ENCODE measurements at regions of chr12 and their contacts with region 1.

Region 1: GRCh38 chr12:12486661-12487240 is 75.9 kb downstream of the DUSP16 start:
- DNase-seq: no peak
- ATAC-seq: no peak
- H3K4me3 ChIP-seq: no peak overlapping the region
- H3K4me3 Mint-ChIP-seq: no peak overlapping the region
- H3K27ac ChIP-seq: peak overlapping the region in 1 of 2 donors; percentile 56
- H3K27ac Mint-ChIP-seq: peak overlapping the region; percentile 73
- H3K4me1 ChIP-seq: peaks cover 37% of the 10 kb centered on the region
- H3K4me1 Mint-ChIP-seq: peaks cover 51% of the 10 kb centered on the region
- H3K27me3 ChIP-seq: no peaks in the 10 kb centered on the region
- H3K27me3 Mint-ChIP-seq: no peaks in the 10 kb centered on the region
- CTCF ChIP-seq: no peak

Region 2: GRCh38 chr12:12456637-12457036 is 30.1 kb before region 1 on chr12:
- CTCF ChIA-PET with region 1: no interaction called
- POLR2A ChIA-PET with region 1: interaction called, 26 read pairs
- intact Hi-C with region 1: no loop called
- DNase-seq: peak in 3 of 14 experiments; percentile 61 to 67 (median 63)
- ATAC-seq: peak; percentile 74
- H3K4me3 ChIP-seq: peak overlapping the region; percentile 29
- H3K4me3 Mint-ChIP-seq: peak overlapping the region; percentile 68
- H3K27ac ChIP-seq: peak overlapping the region in 1 of 2 donors; percentile 68
- H3K27ac Mint-ChIP-seq: peak overlapping the region; percentile 85
- H3K4me1 ChIP-seq: peaks cover 18% of the 10 kb centered on the region
- H3K4me1 Mint-ChIP-seq: peaks cover 42% of the 10 kb centered on the region
- H3K27me3 ChIP-seq: no peaks in the 10 kb centered on the region
- H3K27me3 Mint-ChIP-seq: no peaks in the 10 kb centered on the region
- CTCF ChIP-seq: no peak

Region 3: GRCh38 chr12:12474931-12475795 is 11.6 kb before region 1 on chr12:
- CTCF ChIA-PET with region 1: interaction called, 3 read pairs
- POLR2A ChIA-PET with region 1: interaction called, 14 read pairs
- intact Hi-C with region 1: no loop called
- DNase-seq: peak in 12 of 14 experiments; percentile 18 to 89 (median 44)
- ATAC-seq: peak; percentile 84
- H3K4me3 ChIP-seq: peak overlapping the region; percentile 38
- H3K4me3 Mint-ChIP-seq: peak overlapping the region; percentile 59
- H3K27ac ChIP-seq: peak overlapping the region; percentile 55 to 91
- H3K27ac Mint-ChIP-seq: peak overlapping the region; percentile 93
- H3K4me1 ChIP-seq: peaks cover 50% of the 10 kb centered on the region
- H3K4me1 Mint-ChIP-seq: peaks cover 57% of the 10 kb centered on the region
- H3K27me3 ChIP-seq: no peaks in the 10 kb centered on the region
- H3K27me3 Mint-ChIP-seq: no peaks in the 10 kb centered on the region
- CTCF ChIP-seq: no peak

Region 4: GRCh38 chr12:12611512-12612306 is 125.0 kb after region 1 on chr12 and contains the start of gene CREBL2:
- CTCF ChIA-PET with region 1: no interaction called
- POLR2A ChIA-PET with region 1: no interaction called
- intact Hi-C with region 1: loop called in 1 of 2 experiments (anchors 1 kb)
- DNase-seq: peak; percentile 76 to 94 (median 83)
- ATAC-seq: peak; percentile 90
- H3K4me3 ChIP-seq: peak within 1 kb of the TSS; percentile 80
- H3K4me3 Mint-ChIP-seq: peak within 1 kb of the TSS; percentile 91
- H3K27ac ChIP-seq: peak within 1 kb of the TSS; percentile 92 to 97
- H3K27ac Mint-ChIP-seq: peak within 1 kb of the TSS; percentile 98
- H3K4me1 ChIP-seq: peaks cover 49% of the 10 kb centered on the region
- H3K4me1 Mint-ChIP-seq: peaks cover 71% of the 10 kb centered on the region
- H3K27me3 ChIP-seq: no peaks in the 10 kb centered on the region
- H3K27me3 Mint-ChIP-seq: no peaks in the 10 kb centered on the region
- CTCF ChIP-seq: no peak
- total RNA-seq, gene CREBL2: 9.5 to 12.6 TPM

Region 5: GRCh38 chr12:12724661-12725545 is 238.2 kb after region 1 on chr12:
- CTCF ChIA-PET with region 1: no interaction called
- POLR2A ChIA-PET with region 1: interaction called, 7 read pairs
- intact Hi-C with region 1: loop called in 1 of 2 experiments (anchors 2 kb)
- DNase-seq: peak in 11 of 14 experiments; percentile 72 to 98 (median 84)
- ATAC-seq: peak; percentile 56
- H3K4me3 ChIP-seq: peak overlapping the region; percentile 97
- H3K4me3 Mint-ChIP-seq: peak overlapping the region; percentile 98
- H3K27ac ChIP-seq: peak overlapping the region; percentile 89 to 91
- H3K27ac Mint-ChIP-seq: peak overlapping the region; percentile 95
- H3K4me1 ChIP-seq: peaks cover 37% of the 10 kb centered on the region
- H3K4me1 Mint-ChIP-seq: peaks cover 63% of the 10 kb centered on the region
- H3K27me3 ChIP-seq: no peaks in the 10 kb centered on the region
- H3K27me3 Mint-ChIP-seq: peaks cover 8% of the 10 kb centered on the region
- CTCF ChIP-seq: no peak

Measured in CD4-positive, alpha-beta T cell (primary cell).